ENCODE measurements at regions of chr19 and their contacts with region 1.

Region 1: DNA sequence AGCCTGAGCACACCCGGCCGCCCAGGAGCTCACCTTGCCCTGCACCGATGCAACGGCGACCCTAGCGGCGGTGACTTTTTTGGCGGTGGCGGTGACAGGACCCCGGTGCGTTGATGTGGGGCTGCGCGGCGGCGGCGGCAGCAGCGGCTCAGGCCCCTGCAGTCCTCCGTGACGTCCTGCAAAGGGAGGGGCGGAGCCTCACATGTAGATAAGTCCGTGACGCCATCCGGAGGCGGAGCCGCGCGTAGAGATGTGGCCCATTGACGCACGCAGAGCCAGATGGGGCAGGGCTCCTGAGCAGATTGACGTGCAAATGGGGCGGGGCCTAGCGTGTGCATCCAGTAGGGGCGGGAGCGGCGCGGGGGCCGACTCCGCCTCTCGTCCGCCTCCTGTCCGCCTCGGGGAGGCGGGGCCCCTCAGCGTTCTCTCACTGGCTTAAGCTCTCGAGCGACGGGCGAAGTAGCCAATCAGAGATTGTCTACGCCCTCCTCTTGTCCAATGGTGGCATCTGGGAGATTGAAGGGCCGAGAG is at the start of gene RAB3A:
- DNase-seq: peak; percentile 100
- total RNA-seq, gene RAB3A: 21.7 TPM

Region 2: DNA sequence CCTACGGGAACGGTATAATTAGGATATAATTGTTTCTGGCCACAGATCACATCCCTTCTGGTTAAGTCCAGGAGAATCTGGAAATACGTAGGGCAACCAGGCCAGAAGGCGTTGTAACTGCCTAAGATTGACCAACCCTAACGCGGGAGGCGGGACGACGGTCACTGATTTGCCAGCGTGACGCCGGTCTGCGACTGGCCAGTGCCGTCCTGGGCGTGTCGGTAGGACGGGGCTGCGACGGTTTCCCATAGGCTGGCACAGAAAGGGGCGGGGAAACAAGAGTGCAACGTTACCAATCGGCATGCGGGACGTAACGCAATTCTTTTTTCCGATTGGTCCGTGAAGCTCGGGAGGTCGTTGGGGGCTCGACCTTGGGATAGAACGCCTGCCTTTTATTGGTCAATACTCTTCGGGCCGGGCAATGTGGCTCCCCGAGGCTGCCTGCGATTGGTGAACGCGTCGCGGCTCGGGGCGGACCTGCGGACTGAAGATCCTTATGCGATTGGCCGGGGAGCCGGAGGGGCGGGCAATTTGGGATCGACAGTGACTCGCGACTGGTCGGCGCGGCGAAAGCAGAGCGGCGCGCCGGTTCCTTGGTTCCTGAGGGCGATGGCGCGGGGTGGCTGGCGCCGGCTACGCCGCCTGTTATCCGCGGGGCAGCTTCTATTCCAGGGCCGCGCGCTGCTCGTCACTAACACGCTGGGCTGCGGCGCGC is 11.1 kb before region 1 on chr19 and contains the start of gene MPV17L2:
- intact Hi-C with region 1: loop called (anchors 1 kb)
- DNase-seq: peak; percentile 100
- total RNA-seq, gene MPV17L2: 14.6 TPM

Region 3: GRCh38 chr19:18251587-18252369 is 47.9 kb after region 1 on chr19:
- intact Hi-C with region 1: loop called (anchors 5 kb)
- DNase-seq: no peak

Region 4: GRCh38 chr19:18281082-18282020 is 77.4 kb after region 1 on chr19 and contains the start of gene JUND:
- intact Hi-C with region 1: loop called (anchors 2 kb)
- DNase-seq: peak; percentile 98
- total RNA-seq, gene JUND: 140 TPM

Region 5: GRCh38 chr19:18322759-18323460 is 119.0 kb after region 1 on chr19 and contains the start of gene LSM4:
- intact Hi-C with region 1: loop called (anchors 5 kb)
- DNase-seq: peak; percentile 99
- total RNA-seq, gene LSM4: 83.8 TPM

Region 6: DNA sequence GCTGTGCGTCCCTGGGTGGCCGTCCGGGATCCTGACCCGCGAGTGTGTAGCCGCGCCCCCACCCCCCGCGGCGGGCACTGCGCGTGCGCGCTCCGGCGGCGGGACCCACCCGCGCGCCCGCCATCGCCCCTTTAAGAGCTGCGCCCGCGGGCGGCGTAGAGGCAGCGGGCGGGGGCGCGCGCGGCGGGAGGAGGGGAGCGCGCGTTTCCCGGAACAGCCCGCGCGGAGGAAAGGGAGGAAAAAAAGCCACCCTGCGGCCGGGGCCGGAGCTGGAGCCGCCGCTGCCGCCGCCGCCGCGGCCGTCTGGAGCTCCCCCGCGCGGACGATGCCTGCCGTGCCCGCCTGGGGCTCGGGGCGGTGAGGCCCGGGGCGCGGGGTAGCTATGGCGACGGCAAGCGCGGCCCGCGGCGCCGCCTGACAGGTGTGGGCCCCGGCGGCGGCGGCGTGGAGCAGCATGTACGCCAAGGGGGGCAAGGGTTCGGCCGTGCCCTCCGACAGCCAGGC is 215.3 kb after region 1 on chr19 and contains the start of gene SSBP4:
- intact Hi-C with region 1: loop called (anchors 10 kb)
- DNase-seq: no peak
- total RNA-seq, gene SSBP4: 47.4 TPM